K562 (cell line): ENCODE measurements at regions of chr19 and their contacts with region 1.

Region 1: DNA sequence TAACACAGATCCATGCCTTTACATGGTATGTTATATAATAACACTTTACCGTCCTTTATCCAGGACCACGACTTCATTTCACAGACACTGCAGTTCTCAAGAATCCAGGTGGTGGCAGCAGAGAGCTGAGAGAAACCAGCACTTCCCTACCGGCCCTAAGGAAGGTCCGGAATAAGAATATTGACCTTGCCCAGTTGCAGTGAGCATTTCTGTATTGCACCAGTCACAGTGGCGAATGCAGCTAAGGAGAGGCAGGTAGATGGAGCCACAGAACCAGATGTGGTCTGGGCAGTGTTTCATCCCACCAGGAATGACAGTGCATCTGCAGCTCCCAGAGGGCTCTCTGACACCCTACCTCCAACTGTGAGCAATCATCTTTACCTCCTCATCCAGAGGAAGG is 44.6 kb downstream of the ZNF787 start:
- DNase-seq: peak; percentile 60 to 72 (median 64)
- ATAC-seq: peak; percentile 86
- H3K4me3 ChIP-seq: no peak overlapping the region
- H3K27ac ChIP-seq: no peak overlapping the region
- H3K4me1 ChIP-seq: peaks cover 3 to 12% of the 10 kb centered on the region in 2 experiments; a peak in 4 of 5 replicates
- H3K27me3 ChIP-seq: no peaks in the 10 kb centered on the region
- CTCF ChIP-seq: peak; percentile 84 to 92 (median 85)
- EP300 ChIP-seq: no peak
- POLR2A ChIP-seq: no peak
- RAD21 ChIP-seq: peak; percentile 60 to 84

Region 2: GRCh38 chr19:56170261-56170660 is 93.8 kb after region 1 on chr19:
- CTCF ChIA-PET with region 1: interaction called, 3 read pairs
- POLR2A ChIA-PET with region 1: no interaction called
- in situ Hi-C with region 1: loop called (anchors 5 kb)
- intact Hi-C with region 1: loop called (anchors 1 kb)
- DNase-seq: peak; percentile 36 to 49 (median 45)
- ATAC-seq: peak; percentile 61
- H3K4me3 ChIP-seq: no peak overlapping the region
- H3K27ac ChIP-seq: no peak overlapping the region
- H3K4me1 ChIP-seq: peaks cover 0 to 10% of the 10 kb centered on the region in 2 experiments; a peak in 3 of 5 replicates
- H3K27me3 ChIP-seq: peaks cover 0 to 11% of the 10 kb centered on the region in 2 experiments; a peak in 1 of 5 replicates
- CTCF ChIP-seq: no peak
- EP300 ChIP-seq: no peak
- POLR2A ChIP-seq: no peak
- RAD21 ChIP-seq: no peak

Region 3: GRCh38 chr19:56350416-56351045 is 274.0 kb after region 1 on chr19:
- CTCF ChIA-PET with region 1: no interaction called
- POLR2A ChIA-PET with region 1: no interaction called
- in situ Hi-C with region 1: loop called (anchors 10 kb)
- intact Hi-C with region 1: loop called (anchors 5 kb)
- DNase-seq: peak; percentile 33 to 76 (median 52)
- ATAC-seq: peak; percentile 63
- H3K4me3 ChIP-seq: no peak overlapping the region
- H3K27ac ChIP-seq: no peak overlapping the region
- H3K4me1 ChIP-seq: peaks cover 12 to 23% of the 10 kb centered on the region in 2 experiments
- H3K27me3 ChIP-seq: no peaks in the 10 kb centered on the region
- CTCF ChIP-seq: peak; percentile 74 to 88 (median 75)
- EP300 ChIP-seq: no peak
- POLR2A ChIP-seq: no peak
- RAD21 ChIP-seq: peak; percentile 66 to 82

Region 4: GRCh38 chr19:56642711-56643459 is 566.4 kb after region 1 on chr19 and contains the start of gene SMIM17:
- CTCF ChIA-PET with region 1: no interaction called
- POLR2A ChIA-PET with region 1: no interaction called
- in situ Hi-C with region 1: no loop called
- intact Hi-C with region 1: no loop called
- DNase-seq: no peak
- ATAC-seq: no peak
- H3K4me3 ChIP-seq: no peak within 1 kb of the TSS
- H3K27ac ChIP-seq: no peak within 1 kb of the TSS
- H3K4me1 ChIP-seq: no peaks in the 10 kb centered on the region
- H3K27me3 ChIP-seq: no peaks in the 10 kb centered on the region
- CTCF ChIP-seq: no peak
- EP300 ChIP-seq: no peak
- POLR2A ChIP-seq: no peak
- RAD21 ChIP-seq: no peak
- polyA plus RNA-seq, gene SMIM17: not detected